Left cardiac atrium (tissue), 4 donors: ENCODE measurements at regions of chr18 and their contacts with region 1.

Region 1: DNA sequence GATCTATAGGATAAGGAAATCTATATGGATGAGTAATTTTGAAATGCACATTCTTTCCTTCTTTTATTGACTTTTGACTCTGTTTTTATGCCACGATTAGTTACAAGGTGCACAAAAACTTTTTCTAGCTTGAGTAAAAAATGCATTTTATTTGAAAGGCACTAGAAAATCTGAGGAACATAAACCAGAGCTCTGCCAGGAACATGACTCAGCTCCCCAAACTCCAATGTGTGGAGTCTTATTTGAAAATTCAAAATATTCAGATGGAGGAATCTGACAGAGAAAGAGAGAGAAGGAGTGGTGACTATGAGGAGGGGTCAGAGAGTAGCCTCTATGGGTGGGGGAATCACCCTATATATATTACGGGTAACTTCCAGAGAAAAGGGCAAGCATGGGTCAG is 231.0 kb downstream of the DCC start:
- DNase-seq: no peak
- ATAC-seq: no peak

Region 2: DNA sequence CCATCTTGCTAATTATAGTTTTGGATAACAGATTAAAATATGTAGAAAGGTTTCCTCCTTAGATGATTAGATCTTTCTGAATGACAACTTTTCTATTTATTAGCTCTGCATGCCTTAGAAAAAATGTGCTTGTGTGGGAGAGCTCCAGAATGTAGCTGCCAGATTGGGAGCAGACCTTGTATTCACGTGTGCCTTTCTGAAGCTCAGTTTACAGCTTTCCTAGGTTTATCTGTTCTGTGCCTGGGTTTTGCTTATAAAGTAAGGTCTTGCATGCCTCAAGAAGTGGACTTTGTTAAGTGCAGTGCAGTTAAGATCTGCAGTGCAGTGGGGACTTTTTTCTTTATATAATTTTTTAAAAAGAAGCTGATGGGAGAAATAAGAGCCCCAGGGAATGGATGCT is 52.0 kb before region 1 on chr18:
- intact Hi-C with region 1: no loop called
- DNase-seq: no peak
- ATAC-seq: no peak

Region 3: GRCh38 chr18:52636536-52636935 is 65.6 kb after region 1 on chr18:
- intact Hi-C with region 1: loop called in 1 of 2 experiments (anchors 10 kb)
- DNase-seq: no peak
- ATAC-seq: no peak

Region 4: GRCh38 chr18:53101536-53102105 is 530.6 kb after region 1 on chr18:
- intact Hi-C with region 1: no loop called
- DNase-seq: no peak
- ATAC-seq: no peak